WTC11 (cell line): ENCODE measurements at regions of chr4 and their contacts with region 1.

Region 1: DNA sequence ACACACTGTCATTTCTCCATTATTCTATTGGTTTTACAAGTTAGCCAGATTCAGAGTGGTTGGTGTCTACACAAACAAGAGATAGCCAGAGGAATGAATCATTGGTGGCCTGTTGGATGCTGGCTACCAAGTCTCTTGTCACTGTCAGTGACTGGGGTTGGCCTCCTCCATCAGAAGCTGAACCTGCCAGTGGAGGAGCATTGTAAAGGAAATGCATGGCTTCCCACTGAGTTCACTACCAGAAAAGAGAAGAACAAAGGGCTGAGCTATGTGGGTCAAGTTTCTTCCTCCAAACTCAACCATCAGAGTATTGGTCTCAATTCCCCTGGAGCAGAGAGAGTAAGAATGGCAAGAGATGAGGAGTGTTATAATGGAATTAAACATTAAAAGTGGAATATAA is 26.5 kb upstream of the ANKRD50 start:
- DNase-seq: peak; percentile 31
- ATAC-seq: peak; percentile 100
- H3K4me3 Mint-ChIP-seq: peak overlapping the region; percentile 33; the same call in 1 of the 2 replicates
- H3K27ac Mint-ChIP-seq: peak overlapping the region; percentile 53
- H3K4me1 Mint-ChIP-seq: peaks cover 39% of the 10 kb centered on the region
- H3K27me3 Mint-ChIP-seq: no peaks in the 10 kb centered on the region
- CTCF ChIP-seq: no peak

Region 2: GRCh38 chr4:124684301-124684700 is 54.7 kb before region 1 on chr4:
- CTCF ChIA-PET with region 1: no interaction called
- POLR2A ChIA-PET with region 1: no interaction called
- DNase-seq: no peak
- ATAC-seq: no peak
- H3K4me3 Mint-ChIP-seq: no peak overlapping the region
- H3K27ac Mint-ChIP-seq: peak overlapping the region; percentile 83; the same call in 1 of the 2 replicates
- H3K4me1 Mint-ChIP-seq: peaks cover 36% of the 10 kb centered on the region
- H3K27me3 Mint-ChIP-seq: no peaks in the 10 kb centered on the region
- CTCF ChIP-seq: no peak

Region 3: DNA sequence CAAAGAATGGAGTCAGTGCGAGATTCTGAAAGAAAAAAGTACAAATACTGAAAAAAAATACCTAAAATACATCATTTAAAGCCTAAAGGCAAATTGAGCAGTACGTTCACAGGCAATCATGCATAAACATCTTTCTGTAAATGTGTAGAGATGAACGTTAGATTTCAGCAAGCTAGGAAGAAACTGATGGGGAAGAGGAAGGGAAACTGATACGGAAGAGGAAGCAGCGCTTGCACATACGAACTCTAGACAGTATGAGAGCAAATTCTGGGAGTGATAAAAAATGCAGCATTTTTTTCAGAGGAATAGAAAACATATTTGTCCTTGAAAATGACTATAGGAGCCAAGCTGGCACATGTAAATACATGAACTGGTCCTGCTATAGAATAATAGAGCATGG is 35.8 kb before region 1 on chr4:
- CTCF ChIA-PET with region 1: no interaction called
- POLR2A ChIA-PET with region 1: no interaction called
- DNase-seq: no peak
- ATAC-seq: no peak
- H3K4me3 Mint-ChIP-seq: no peak overlapping the region
- H3K27ac Mint-ChIP-seq: no peak overlapping the region
- H3K4me1 Mint-ChIP-seq: peaks cover 29% of the 10 kb centered on the region
- H3K27me3 Mint-ChIP-seq: no peaks in the 10 kb centered on the region
- CTCF ChIP-seq: no peak

Region 4: DNA sequence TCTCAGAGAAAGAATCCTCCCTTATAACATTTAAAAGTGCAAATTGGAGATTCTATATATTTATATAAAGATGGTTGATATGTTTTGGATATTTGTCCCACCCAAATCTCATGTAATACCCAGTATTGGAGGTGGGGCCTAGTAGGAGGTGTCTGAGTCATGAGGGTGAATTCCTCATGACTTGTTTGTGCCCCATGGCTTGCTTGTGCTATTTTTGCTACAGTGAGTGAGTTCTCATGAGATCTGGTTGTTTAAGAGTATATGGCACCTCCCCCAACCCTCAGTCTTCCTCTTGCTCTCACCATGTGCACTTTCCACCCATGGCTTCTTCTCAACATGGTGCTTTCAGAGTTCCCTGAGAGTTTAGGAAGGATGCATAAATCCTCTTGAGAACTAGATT is 16.9 kb before region 1 on chr4:
- CTCF ChIA-PET with region 1: interaction called, 14 read pairs
- POLR2A ChIA-PET with region 1: no interaction called
- DNase-seq: no peak
- ATAC-seq: no peak
- H3K4me3 Mint-ChIP-seq: no peak overlapping the region
- H3K27ac Mint-ChIP-seq: no peak overlapping the region
- H3K4me1 Mint-ChIP-seq: no peaks in the 10 kb centered on the region
- H3K27me3 Mint-ChIP-seq: no peaks in the 10 kb centered on the region
- CTCF ChIP-seq: no peak

Region 5: GRCh38 chr4:124753941-124754581 is 15.1 kb after region 1 on chr4:
- CTCF ChIA-PET with region 1: no interaction called
- POLR2A ChIA-PET with region 1: no interaction called
- DNase-seq: no peak
- ATAC-seq: no peak
- H3K4me3 Mint-ChIP-seq: no peak overlapping the region
- H3K27ac Mint-ChIP-seq: no peak overlapping the region
- H3K4me1 Mint-ChIP-seq: no peaks in the 10 kb centered on the region
- H3K27me3 Mint-ChIP-seq: peaks cover 36% of the 10 kb centered on the region
- CTCF ChIP-seq: no peak

Region 6: DNA sequence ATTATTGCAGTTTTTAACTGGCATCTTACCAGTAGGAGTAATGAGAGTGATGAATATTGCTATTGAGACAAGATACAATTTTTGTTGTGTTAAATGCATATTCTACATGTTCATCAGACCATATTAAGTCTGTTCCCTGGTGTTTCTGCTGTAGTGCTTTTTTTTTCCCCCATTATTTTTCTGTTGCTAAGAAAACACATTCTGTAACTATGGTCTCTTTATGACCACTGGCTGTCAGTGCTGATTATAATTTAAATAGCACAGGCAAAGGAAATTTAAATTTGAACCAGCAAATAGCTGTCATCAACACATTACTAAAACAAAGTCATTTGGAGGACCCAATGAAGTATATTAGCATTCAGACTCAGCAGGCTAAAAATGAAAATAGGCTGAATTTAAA is 71.8 kb after region 1 on chr4:
- CTCF ChIA-PET with region 1: no interaction called
- POLR2A ChIA-PET with region 1: no interaction called
- DNase-seq: no peak
- ATAC-seq: no peak
- H3K4me3 Mint-ChIP-seq: no peak overlapping the region
- H3K27ac Mint-ChIP-seq: no peak overlapping the region
- H3K4me1 Mint-ChIP-seq: peaks cover 33% of the 10 kb centered on the region
- H3K27me3 Mint-ChIP-seq: peaks cover 2% of the 10 kb centered on the region; the same call in 1 of the 2 replicates
- CTCF ChIP-seq: no peak